CD8-positive, alpha-beta T cell (primary cell): ENCODE measurements at regions of chr3 and their contacts with region 1.

Region 1: DNA sequence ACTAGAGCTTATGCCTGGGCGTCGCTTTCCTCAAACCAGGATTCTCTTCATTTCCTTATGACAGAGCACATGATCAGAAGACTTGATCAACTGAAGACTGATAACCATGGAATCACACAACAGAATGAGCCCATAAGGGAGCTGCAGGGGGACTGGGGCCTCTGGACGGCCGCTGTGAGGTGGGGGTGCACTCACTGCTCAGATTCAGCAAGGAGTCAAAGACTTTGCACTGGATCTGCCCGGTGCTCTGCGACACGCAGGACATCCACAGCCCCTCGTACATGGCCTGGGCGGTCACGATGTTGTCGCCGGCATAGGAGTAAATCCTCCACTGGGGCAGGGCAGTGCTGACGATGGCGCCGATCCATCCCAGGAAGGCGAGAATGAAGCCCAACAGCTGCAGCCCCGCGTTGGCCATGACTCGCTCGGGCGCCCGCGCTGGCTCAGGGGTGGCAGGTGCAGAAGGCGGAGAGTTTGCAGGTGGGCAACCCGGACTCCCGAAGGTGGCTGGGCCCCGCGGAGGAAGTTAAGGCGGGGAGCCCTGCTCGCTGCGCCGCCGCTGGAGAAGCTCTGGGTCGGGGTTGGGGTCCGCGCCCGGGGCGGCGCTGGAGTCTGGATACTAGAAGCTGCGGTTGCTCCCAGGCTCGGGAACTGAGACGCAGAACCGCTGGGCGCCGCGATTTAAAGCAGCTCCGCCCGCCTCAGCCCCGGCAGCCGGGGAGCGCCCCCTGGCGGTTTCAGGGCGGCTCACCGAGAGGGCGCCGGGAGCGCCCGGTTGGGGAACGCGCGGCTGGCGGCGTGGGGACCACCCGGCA is at the start of gene CLDN1:
- DNase-seq: peak; percentile 35 to 84 (median 68)
- ATAC-seq: peak; percentile 91
- H3K4me3 ChIP-seq: peak within 1 kb of the TSS; percentile 42 to 56
- H3K4me3 Mint-ChIP-seq: peak within 1 kb of the TSS; percentile 68
- H3K27ac ChIP-seq: no peak within 1 kb of the TSS
- H3K27ac Mint-ChIP-seq: no peak within 1 kb of the TSS
- H3K4me1 ChIP-seq: peaks cover 13% of the 10 kb centered on the region
- H3K4me1 Mint-ChIP-seq: peaks cover 14% of the 10 kb centered on the region
- H3K27me3 ChIP-seq: peaks cover 4 to 6% of the 10 kb centered on the region in 2 experiments
- H3K27me3 Mint-ChIP-seq: peaks cover 32% of the 10 kb centered on the region
- CTCF ChIP-seq: peak; percentile 82
- total RNA-seq, gene CLDN1: not detected

Region 2: GRCh38 chr3:189967254-189967865 is 354.6 kb before region 1 on chr3:
- CTCF ChIA-PET with region 1: interaction called, 34 read pairs
- POLR2A ChIA-PET with region 1: no interaction called
- intact Hi-C with region 1: loop called (anchors 1 kb)
- DNase-seq: peak in 3 of 9 experiments; percentile 13 to 61 (median 45)
- ATAC-seq: no peak
- H3K4me3 ChIP-seq: no peak overlapping the region
- H3K4me3 Mint-ChIP-seq: no peak overlapping the region
- H3K27ac ChIP-seq: no peak overlapping the region
- H3K27ac Mint-ChIP-seq: no peak overlapping the region
- H3K4me1 ChIP-seq: no peaks in the 10 kb centered on the region
- H3K4me1 Mint-ChIP-seq: no peaks in the 10 kb centered on the region
- H3K27me3 ChIP-seq: no peaks in the 10 kb centered on the region
- H3K27me3 Mint-ChIP-seq: peaks cover 9% of the 10 kb centered on the region
- CTCF ChIP-seq: peak; percentile 92

Region 3: DNA sequence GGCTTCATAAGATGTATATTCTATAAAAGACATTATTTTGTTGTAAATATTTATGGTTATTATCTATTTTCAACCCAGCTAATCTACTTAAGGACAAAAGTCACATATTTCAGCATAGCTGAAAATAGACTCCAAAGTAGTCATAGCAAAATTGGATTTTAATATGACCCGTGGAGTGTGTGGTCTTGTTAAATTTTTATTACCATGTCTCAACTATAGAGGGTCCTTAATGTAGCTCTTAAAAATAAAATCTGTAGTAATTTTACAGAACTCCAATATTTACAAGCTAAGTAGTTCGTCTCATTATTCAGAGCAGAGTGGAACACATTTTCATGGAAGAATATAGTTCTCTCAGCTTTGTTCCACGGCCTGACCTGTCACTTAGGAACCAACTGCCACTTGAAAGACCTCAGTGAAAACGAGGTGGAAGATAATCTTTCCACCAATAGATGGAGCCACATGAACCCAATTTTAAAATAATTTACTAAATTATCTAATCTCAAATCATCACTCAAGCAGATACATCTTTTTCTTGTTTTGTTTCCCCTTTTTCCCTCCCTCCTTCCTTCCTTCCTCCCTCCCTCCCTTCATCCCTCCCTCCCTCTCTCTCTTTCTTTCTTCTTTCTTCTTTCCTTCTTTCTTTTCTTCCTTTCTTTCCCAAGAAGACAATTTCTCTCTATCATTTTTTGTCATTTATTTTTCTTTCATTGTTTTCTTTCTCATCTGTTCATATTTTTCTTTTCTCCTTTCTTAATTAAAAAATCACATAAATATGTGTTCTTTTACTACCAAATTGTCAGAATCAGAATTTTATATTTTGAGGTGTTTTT is 96.9 kb before region 1 on chr3:
- CTCF ChIA-PET with region 1: interaction called, 27 read pairs
- POLR2A ChIA-PET with region 1: no interaction called
- intact Hi-C with region 1: loop called (anchors 1 kb)
- DNase-seq: peak in 2 of 9 experiments; percentile 4 to 44
- ATAC-seq: no peak
- H3K4me3 ChIP-seq: no peak overlapping the region
- H3K4me3 Mint-ChIP-seq: no peak overlapping the region
- H3K27ac ChIP-seq: no peak overlapping the region
- H3K27ac Mint-ChIP-seq: no peak overlapping the region
- H3K4me1 ChIP-seq: no peaks in the 10 kb centered on the region
- H3K4me1 Mint-ChIP-seq: no peaks in the 10 kb centered on the region
- H3K27me3 ChIP-seq: no peaks in the 10 kb centered on the region
- H3K27me3 Mint-ChIP-seq: peaks cover 7% of the 10 kb centered on the region
- CTCF ChIP-seq: peak; percentile 47